CD8-positive, alpha-beta memory T cell (primary cell): ENCODE measurements at regions of chr7 and their contacts with region 1.

Region 1: DNA sequence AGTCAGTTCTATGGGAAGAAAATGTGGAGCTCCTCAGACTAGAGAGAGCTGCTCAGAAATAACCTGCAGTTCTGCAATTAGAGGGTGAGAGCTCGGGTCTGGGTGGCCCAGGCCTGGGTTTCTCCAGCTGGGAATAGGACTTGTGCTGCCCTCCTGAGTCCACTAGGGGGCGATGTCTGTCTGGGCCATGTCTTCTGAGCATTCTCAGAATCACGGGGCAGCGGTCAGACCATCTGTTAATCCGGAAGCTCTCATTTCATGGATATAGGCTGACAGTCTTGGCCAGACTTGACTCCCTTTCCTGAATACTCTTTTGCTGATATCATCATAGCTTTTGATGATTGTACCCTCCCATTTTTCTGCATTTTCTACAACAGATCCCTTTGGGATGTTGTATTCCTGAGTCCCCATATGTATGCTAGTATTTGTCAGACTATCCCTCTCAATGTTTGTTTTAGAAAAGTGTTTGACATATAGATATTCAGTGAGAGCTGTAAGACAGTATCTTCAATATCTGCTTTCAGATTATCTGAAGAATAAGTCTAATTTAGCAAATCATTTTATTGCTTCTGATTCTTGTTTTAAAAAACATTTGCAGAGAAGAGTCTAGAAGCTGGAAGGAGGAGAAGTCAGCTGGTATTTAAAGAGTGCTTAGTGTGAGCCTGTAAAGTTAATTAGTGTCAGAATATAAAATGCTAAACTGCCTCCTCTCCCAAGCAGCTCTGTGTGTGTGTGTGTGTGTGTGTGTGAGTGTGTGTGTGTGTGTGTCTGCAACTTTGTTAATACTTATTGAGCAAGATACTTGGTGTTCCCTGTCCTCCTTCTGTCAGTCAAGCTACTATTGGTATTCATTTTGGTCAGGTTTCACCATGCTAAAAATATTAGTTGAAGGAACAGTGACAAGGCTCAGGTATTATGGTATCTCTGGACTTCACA is 38.0 kb downstream of the STARD3NL start:
- DNase-seq: peak; percentile 63 to 88 (median 77)
- H3K4me3 ChIP-seq: peak overlapping the region; percentile 38
- H3K4me3 Mint-ChIP-seq: peak overlapping the region; percentile 53 to 91 (median 80)
- H3K27ac ChIP-seq: no peak overlapping the region
- H3K27ac Mint-ChIP-seq: peak overlapping the region; percentile 88 to 98 (median 94)
- H3K4me1 ChIP-seq: peaks cover 50% of the 10 kb centered on the region
- H3K4me1 Mint-ChIP-seq: peaks cover 53 to 64% (median 62%) of the 10 kb centered on the region in 3 donors
- H3K27me3 ChIP-seq: no peaks in the 10 kb centered on the region
- H3K27me3 Mint-ChIP-seq: no peaks in the 10 kb centered on the region

Region 2: DNA sequence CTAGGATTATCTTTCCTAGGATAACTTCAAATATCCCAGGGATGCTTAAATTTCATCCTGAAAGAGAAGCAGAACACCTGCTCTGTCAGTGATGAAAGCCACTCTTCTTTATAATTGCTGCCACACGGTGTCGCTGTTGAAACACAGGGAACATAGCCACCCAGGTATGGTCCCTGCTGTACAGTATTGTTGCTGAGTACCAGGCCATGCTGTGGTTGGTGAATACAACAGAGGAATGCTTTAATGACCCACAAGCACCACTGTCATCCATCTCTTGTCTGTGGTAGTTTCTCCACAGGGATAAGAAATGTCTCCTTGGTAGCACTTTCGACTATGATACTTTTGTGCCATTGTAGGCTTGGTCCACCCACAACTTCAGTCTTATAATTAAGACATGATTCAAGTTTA is 108.5 kb before region 1 on chr7:
- CTCF ChIA-PET with region 1: interaction called, 50 read pairs
- POLR2A ChIA-PET with region 1: no interaction called
- DNase-seq: peak; percentile 39 to 77 (median 50)
- H3K4me3 ChIP-seq: no peak overlapping the region
- H3K4me3 Mint-ChIP-seq: no peak overlapping the region
- H3K27ac ChIP-seq: no peak overlapping the region
- H3K27ac Mint-ChIP-seq: no peak overlapping the region
- H3K4me1 ChIP-seq: no peaks in the 10 kb centered on the region
- H3K4me1 Mint-ChIP-seq: peaks cover 0 to 5% (median 4%) of the 10 kb centered on the region in 3 donors
- H3K27me3 ChIP-seq: peaks cover 4% of the 10 kb centered on the region
- H3K27me3 Mint-ChIP-seq: peaks cover 9 to 37% of the 10 kb centered on the region in 2 donors

Region 3: GRCh38 chr7:38178004-38178694 is 37.9 kb before region 1 on chr7 and contains the start of gene STARD3NL:
- CTCF ChIA-PET with region 1: interaction called, 16 read pairs
- POLR2A ChIA-PET with region 1: interaction called, 4 read pairs
- DNase-seq: peak; percentile 82 to 95 (median 91)
- H3K4me3 ChIP-seq: peak within 1 kb of the TSS; percentile 95
- H3K4me3 Mint-ChIP-seq: peak within 1 kb of the TSS; percentile 96 to 100 (median 98)
- H3K27ac ChIP-seq: peak within 1 kb of the TSS; percentile 80
- H3K27ac Mint-ChIP-seq: peak within 1 kb of the TSS; percentile 95 to 99 (median 96)
- H3K4me1 ChIP-seq: peaks cover 29% of the 10 kb centered on the region
- H3K4me1 Mint-ChIP-seq: peaks cover 41 to 51% (median 47%) of the 10 kb centered on the region in 3 donors
- H3K27me3 ChIP-seq: no peaks in the 10 kb centered on the region
- H3K27me3 Mint-ChIP-seq: peaks cover 6 to 10% of the 10 kb centered on the region in 2 donors
- total RNA-seq, gene STARD3NL: 41.5 to 43.8 TPM

Region 4: DNA sequence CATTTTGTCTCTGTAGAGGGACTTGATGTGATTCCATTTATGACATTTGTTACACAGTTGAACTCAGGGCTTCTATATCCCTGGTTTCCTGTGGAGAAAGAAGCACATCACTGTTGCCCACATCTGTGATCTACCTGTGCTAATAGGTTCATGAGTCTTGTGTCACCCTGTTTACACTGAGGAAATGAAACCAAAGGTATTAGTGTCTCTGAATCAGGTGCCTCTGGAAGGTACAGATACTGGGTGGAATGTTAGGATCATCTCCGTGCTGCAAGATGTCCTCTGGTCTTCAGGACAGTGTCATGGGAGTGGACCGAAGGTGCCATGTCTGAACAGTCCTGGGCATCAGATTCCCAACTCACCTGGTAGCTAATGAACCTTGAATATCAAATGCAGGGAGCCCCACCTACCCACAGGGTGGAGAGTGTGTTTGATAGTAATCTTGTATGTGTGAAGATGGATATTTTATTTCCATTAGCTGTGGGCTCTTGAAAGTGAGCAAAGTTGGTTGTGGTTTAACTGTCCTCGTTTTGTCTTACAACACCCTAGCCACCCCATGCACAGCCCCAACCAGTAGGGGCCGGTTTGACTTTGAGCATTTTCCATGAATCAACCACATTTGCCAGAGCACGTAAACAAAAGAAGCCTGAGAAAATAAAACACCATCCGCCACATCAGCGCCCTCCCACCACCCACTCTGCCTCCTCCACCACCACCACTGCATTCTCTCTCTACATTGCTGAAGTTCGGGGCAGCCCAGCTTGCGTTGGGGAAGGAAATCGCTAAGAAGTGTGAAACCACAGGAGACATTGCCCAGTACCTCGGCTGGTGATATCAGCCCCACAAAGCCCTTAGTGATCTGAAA is 16.7 kb after region 1 on chr7:
- CTCF ChIA-PET with region 1: interaction called, 82 read pairs
- POLR2A ChIA-PET with region 1: interaction called, 9 read pairs
- DNase-seq: peak; percentile 58 to 95 (median 66)
- H3K4me3 ChIP-seq: peak overlapping the region; percentile 27
- H3K4me3 Mint-ChIP-seq: peak overlapping the region; percentile 40 to 83 (median 77)
- H3K27ac ChIP-seq: peak overlapping the region; percentile 40
- H3K27ac Mint-ChIP-seq: peak overlapping the region; percentile 93 to 98 (median 97)
- H3K4me1 ChIP-seq: peaks cover 72% of the 10 kb centered on the region
- H3K4me1 Mint-ChIP-seq: peaks cover 91 to 100% (median 100%) of the 10 kb centered on the region in 3 donors
- H3K27me3 ChIP-seq: no peaks in the 10 kb centered on the region
- H3K27me3 Mint-ChIP-seq: no peaks in the 10 kb centered on the region

Region 5: DNA sequence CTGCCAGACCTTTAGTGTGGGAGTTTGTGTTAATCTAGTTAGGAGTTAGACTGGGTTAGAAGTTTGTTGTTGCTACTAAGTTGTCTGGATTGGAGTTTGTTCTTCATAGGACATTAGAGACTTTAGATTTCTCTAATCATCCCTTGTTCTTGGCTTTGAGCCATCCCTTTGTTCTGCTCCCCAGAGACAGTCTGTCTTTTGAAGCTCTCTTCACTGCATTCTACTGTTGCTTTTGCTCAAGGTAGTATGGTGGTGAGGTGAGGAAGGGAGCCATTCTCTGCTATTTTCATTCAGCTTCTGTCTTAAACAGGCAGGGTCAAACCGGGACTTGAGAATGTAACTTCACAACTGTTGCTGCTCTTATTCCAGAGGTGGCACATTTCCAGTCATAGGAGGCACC is 67.8 kb after region 1 on chr7:
- CTCF ChIA-PET with region 1: no interaction called
- POLR2A ChIA-PET with region 1: no interaction called
- DNase-seq: no peak
- H3K4me3 ChIP-seq: no peak overlapping the region
- H3K4me3 Mint-ChIP-seq: no peak overlapping the region
- H3K27ac ChIP-seq: no peak overlapping the region
- H3K27ac Mint-ChIP-seq: no peak overlapping the region
- H3K4me1 ChIP-seq: no peaks in the 10 kb centered on the region
- H3K4me1 Mint-ChIP-seq: peaks cover 0 to 2% (median 0%) of the 10 kb centered on the region in 3 donors
- H3K27me3 ChIP-seq: no peaks in the 10 kb centered on the region
- H3K27me3 Mint-ChIP-seq: no peaks in the 10 kb centered on the region

Region 6: GRCh38 chr7:38318803-38319416 is 102.9 kb after region 1 on chr7:
- CTCF ChIA-PET with region 1: interaction called, 75 read pairs
- POLR2A ChIA-PET with region 1: no interaction called
- DNase-seq: no peak
- H3K4me3 ChIP-seq: peak overlapping the region; percentile 19
- H3K4me3 Mint-ChIP-seq: peak overlapping the region; percentile 90 to 99 (median 93)
- H3K27ac ChIP-seq: peak overlapping the region; percentile 45
- H3K27ac Mint-ChIP-seq: peak overlapping the region; percentile 91 to 100 (median 97)
- H3K4me1 ChIP-seq: peaks cover 26% of the 10 kb centered on the region
- H3K4me1 Mint-ChIP-seq: peaks cover 38 to 59% (median 54%) of the 10 kb centered on the region in 3 donors
- H3K27me3 ChIP-seq: no peaks in the 10 kb centered on the region
- H3K27me3 Mint-ChIP-seq: no peaks in the 10 kb centered on the region

Region 7: DNA sequence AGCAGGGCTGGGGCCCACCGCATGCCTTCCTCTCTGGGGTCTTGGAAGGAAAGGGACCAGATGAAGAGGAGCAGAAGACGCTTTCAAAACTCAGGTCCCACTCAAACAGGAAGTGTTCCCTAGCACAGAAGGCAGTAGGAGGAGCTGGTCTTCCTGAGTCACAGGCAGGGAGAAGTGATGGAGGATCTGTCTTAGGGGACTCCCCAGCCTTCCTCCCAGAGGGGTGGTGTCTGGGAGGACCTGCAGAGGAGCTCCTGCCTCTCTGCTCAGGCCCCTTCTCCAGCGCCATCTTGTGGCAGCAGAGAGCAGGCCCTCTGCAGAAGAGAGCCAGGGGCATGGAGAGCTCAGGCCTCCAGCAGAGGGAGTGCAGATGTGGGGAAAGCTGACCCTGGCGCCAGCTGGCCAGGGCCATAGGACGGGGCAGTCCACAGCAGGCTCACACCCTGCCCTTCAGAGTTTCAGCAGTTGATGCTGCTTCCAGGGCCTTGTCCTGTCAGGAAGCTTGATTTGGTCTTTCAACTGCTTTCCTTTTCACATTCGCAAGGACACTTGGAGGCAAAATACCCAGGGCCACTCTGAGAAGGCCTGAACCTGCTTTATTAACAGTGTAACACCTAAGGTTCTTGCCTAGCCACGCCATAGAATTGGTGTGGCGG is 119.6 kb after region 1 on chr7:
- CTCF ChIA-PET with region 1: interaction called, 214 read pairs
- POLR2A ChIA-PET with region 1: interaction called, 23 read pairs
- DNase-seq: peak; percentile 74 to 91 (median 81)
- H3K4me3 ChIP-seq: peak overlapping the region; percentile 15
- H3K4me3 Mint-ChIP-seq: peak overlapping the region; percentile 88 to 97 (median 96)
- H3K27ac ChIP-seq: peak overlapping the region; percentile 80
- H3K27ac Mint-ChIP-seq: peak overlapping the region; percentile 10 to 98 (median 94)
- H3K4me1 ChIP-seq: peaks cover 14% of the 10 kb centered on the region
- H3K4me1 Mint-ChIP-seq: peaks cover 57 to 68% (median 67%) of the 10 kb centered on the region in 3 donors
- H3K27me3 ChIP-seq: no peaks in the 10 kb centered on the region
- H3K27me3 Mint-ChIP-seq: no peaks in the 10 kb centered on the region

Region 8: DNA sequence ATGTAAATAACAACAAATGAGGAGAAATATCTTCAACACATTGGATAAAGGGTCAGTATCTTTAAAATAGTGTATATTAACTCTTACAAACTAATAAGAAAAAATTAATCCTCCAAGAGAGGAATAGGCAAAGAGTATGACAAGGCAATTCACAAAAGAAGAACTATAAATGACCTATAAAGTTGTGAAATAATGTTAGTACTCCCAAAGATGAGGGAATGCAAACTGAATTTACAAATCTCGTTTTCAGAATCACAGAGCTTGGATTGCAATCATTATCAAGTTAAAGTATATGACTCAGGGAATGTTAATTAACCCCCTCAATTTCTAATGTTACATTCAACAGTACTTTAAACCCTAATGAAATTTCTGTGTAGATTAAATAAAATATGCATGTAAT is 144.8 kb after region 1 on chr7:
- CTCF ChIA-PET with region 1: interaction called, 394 read pairs
- POLR2A ChIA-PET with region 1: interaction called, 6 read pairs
- DNase-seq: no peak
- H3K4me3 ChIP-seq: peak overlapping the region; percentile 26
- H3K4me3 Mint-ChIP-seq: peak overlapping the region; percentile 95 to 99 (median 97)
- H3K27ac ChIP-seq: no peak overlapping the region
- H3K27ac Mint-ChIP-seq: peak overlapping the region in 6 of 8 donors; percentile 36 to 99 (median 96)
- H3K4me1 ChIP-seq: peaks cover 19% of the 10 kb centered on the region
- H3K4me1 Mint-ChIP-seq: peaks cover 35 to 67% (median 50%) of the 10 kb centered on the region in 3 donors
- H3K27me3 ChIP-seq: no peaks in the 10 kb centered on the region
- H3K27me3 Mint-ChIP-seq: no peaks in the 10 kb centered on the region